Common myeloid progenitor, CD34-positive (primary cell): ENCODE measurements at regions of chr16 and their contacts with region 1.

Region 1: DNA sequence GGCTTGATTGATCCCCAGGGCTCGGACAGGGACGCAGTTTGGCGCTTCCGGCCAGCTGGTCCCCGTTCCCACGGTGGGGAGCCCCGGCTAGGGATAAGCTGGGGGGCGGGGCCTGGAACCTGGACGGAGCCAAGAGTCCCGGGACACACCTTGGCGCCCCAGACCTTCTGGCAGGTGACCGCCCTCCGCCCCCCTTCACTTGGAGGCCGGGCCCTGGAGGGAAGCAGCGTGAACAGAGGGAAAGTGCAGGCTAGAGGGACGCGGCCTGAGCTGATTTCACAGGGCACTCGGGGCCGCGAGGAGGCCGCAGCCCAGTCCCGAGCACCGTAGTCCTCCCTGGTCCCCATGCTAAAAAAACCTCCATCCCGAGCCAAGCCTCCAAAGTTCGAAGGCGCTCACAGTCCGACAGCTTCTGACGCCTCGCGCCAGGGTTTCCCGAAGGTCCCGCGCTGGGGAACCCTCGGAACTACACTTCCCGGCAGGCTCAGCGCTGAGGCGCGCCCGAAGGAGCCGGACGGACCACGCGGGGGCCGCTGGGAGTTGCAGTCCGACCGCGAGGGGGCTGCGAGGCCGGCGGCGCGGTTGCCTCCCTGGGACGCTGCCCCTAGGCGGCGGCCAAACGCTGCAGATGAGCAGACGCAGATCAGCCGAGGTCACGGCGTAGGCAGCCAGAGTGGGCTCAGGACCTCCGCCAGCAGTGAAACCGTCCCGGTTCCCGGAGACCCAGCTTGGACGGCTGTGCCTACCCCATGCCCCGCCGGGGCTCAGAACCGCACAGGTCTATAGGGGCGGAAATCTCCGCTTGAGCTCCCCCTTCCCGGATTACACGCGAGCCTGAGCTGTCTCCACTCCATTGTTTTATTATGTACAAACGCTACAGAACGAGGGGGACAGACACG is at the start of gene TBX6:
- DNase-seq: peak; percentile 92 to 95 (median 94)
- H3K4me3 ChIP-seq: peak within 1 kb of the TSS; percentile 53 to 86 (median 75)
- H3K27ac ChIP-seq: peak within 1 kb of the TSS in 1 of 2 experiments; percentile 87
- H3K4me1 ChIP-seq: peaks cover 0 to 58% (median 46%) of the 10 kb centered on the region in 4 experiments
- H3K27me3 ChIP-seq: no peaks in the 10 kb centered on the region

Region 2: DNA sequence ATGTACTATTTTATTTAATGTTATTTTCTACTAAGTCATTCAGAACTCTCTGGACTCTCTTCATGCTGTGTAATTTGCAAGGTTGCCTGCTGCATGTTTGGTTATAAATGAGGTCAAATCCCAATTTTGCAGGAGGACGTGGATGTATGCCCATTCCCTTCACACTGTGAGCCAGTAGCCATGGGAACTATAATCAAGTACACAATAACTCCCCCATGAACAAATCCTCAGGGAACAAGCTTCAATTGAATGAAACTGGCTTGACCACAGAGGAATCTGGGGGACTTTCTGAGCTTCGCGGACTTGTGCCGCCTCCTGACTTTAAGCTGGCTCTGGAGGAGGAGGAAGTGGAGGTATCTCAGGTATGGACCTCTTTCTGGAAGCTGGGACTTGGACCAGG is 151.1 kb before region 1 on chr16:
- CTCF ChIA-PET with region 1: no interaction called
- POLR2A ChIA-PET with region 1: no interaction called
- DNase-seq: no peak
- H3K4me3 ChIP-seq: no peak overlapping the region
- H3K27ac ChIP-seq: no peak overlapping the region
- H3K4me1 ChIP-seq: peaks cover 5 to 19% (median 10%) of the 10 kb centered on the region in 4 experiments
- H3K27me3 ChIP-seq: no peaks in the 10 kb centered on the region

Region 3: GRCh38 chr16:30052671-30053372 is 38.9 kb before region 1 on chr16:
- CTCF ChIA-PET with region 1: interaction called, 20 read pairs
- POLR2A ChIA-PET with region 1: no interaction called
- DNase-seq: peak; percentile 85 to 88 (median 86)
- H3K4me3 ChIP-seq: peak overlapping the region; percentile 62 to 88 (median 83)
- H3K27ac ChIP-seq: peak overlapping the region in 1 of 2 experiments; percentile 80
- H3K4me1 ChIP-seq: peaks cover 0 to 22% (median 12%) of the 10 kb centered on the region in 4 experiments
- H3K27me3 ChIP-seq: no peaks in the 10 kb centered on the region

Region 4: DNA sequence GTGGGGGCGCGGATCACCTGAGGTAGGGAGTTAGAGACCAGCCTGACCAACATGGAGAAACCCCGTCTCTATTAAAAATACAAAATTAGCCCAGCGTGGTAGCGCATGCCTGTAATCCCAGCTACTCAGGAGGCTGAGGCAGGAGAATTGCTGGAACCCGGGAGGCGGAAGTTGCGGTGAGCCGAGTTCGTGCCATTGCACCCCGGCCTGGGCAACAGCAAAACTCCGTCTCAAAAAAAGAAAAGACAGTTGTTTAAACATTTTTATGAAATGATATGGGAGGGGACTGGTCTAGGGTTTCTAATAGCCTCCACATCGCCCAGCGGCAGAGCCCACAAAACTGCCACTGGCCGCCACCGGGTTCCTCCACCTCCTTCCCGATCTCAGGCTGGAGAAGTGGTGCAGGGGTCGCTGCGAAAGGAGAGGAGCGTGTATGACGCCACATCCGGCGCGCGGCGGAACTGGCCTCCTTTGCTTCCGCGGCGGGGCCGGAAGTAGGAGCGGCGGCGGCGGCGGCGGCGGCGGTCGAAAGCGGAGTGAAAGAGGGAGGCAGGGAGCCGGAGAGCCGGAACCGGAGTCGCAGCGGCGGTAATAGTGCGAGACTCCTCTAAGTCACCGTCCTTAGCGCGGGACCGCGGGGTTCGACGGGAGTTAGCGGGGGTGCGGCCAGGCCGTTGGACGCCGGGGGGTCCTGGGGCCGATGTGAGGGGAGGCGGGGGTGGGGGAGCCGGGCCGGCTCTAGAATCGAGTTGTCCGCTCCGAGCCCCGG is 16.0 kb before region 1 on chr16 and contains the start of gene PPP4C:
- CTCF ChIA-PET with region 1: interaction called, 235 read pairs
- POLR2A ChIA-PET with region 1: interaction called, 11 read pairs
- DNase-seq: peak; percentile 89 to 93 (median 91)
- H3K4me3 ChIP-seq: peak within 1 kb of the TSS; percentile 80 to 96 (median 91)
- H3K27ac ChIP-seq: peak within 1 kb of the TSS; percentile 79 to 91
- H3K4me1 ChIP-seq: peaks cover 6 to 33% (median 19%) of the 10 kb centered on the region in 4 experiments
- H3K27me3 ChIP-seq: no peaks in the 10 kb centered on the region

Region 5: DNA sequence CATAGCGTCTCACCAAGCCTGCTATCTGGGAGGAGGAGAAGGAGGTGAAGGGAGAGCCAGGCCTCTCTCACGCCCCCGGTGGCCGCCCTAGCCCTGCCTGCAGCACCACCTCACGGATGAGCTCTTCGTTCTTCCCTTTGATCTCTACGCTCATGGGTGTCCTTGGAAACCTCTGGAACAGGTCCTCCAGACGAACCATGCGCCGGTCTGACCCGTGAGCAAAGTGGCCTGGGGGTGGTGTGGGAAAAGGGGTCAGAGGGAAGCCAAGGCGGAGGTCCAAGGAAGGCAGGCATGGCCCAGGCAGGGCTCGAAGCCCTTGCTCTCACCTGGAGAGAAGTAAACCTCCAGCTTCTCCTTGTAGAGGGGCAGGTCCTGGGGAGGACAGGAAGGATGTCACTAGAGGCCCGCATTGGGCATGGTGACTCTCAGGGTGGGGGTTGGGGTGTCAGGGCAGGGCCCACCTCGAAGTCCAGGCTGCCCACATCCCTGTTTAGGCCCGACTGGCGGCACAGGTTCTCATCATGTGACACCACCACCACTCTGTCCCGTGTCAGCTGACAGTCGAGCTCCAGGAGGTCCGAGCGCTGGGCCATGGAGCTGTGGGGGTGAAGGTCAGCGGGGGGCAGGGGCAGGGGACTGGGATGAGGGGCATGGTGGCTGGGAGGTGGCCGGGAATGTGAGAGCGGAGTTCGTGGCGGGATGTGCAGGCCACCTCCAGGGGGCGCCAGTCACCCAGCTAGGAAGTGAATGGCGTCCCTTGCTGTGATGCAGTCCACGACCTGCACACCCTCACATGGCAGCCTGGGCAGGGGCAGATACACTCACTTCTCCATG is 20.7 kb after region 1 on chr16:
- CTCF ChIA-PET with region 1: interaction called, 54 read pairs
- POLR2A ChIA-PET with region 1: no interaction called
- DNase-seq: peak; percentile 30 to 46 (median 45)
- H3K4me3 ChIP-seq: no peak overlapping the region
- H3K27ac ChIP-seq: no peak overlapping the region
- H3K4me1 ChIP-seq: no peaks in the 10 kb centered on the region
- H3K27me3 ChIP-seq: no peaks in the 10 kb centered on the region